ENCODE measurements at regions of chr16 and their contacts with region 1.

Region 1: DNA sequence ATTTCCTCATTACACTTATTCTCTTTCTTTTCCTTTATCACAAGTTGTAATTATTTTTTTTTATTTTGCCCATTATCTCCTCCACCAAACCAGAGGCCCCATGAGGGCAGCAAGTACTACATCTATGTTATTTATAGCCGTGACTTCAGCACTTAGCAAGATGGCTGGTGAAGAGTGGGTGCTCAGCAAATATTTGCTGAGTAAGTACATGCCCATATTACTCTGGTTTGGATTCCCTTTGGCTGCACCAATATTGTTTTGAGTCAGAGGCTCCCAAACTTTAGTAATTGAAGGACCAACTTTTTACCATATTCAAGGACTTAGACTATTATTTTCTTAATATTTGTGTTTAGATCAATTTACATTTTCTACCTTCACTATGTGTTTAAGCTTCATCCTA is 83.2 kb downstream of the HS3ST2 start:
- DNase-seq: no peak
- H3K4me3 ChIP-seq: no peak overlapping the region
- H3K27ac ChIP-seq: no peak overlapping the region
- H3K4me1 ChIP-seq: no peaks in the 10 kb centered on the region
- H3K27me3 ChIP-seq: no peaks in the 10 kb centered on the region
- CTCF ChIP-seq: no peak

Region 2: GRCh38 chr16:22878955-22879354 is 18.2 kb before region 1 on chr16:
- intact Hi-C with region 1: loop called (anchors 2 kb)
- DNase-seq: no peak
- H3K4me3 ChIP-seq: no peak overlapping the region
- H3K27ac ChIP-seq: no peak overlapping the region
- H3K4me1 ChIP-seq: no peaks in the 10 kb centered on the region
- H3K27me3 ChIP-seq: no peaks in the 10 kb centered on the region
- CTCF ChIP-seq: no peak

Region 3: GRCh38 chr16:22933173-22933572 is 36.0 kb after region 1 on chr16:
- intact Hi-C with region 1: no loop called
- DNase-seq: no peak
- H3K4me3 ChIP-seq: no peak overlapping the region
- H3K27ac ChIP-seq: no peak overlapping the region
- H3K4me1 ChIP-seq: no peaks in the 10 kb centered on the region
- H3K27me3 ChIP-seq: no peaks in the 10 kb centered on the region
- CTCF ChIP-seq: no peak

Measured in ascending aorta (tissue), 2 donors.